ENCODE measurements at regions of chr10 and their contacts with region 1.

Region 1: GRCh38 chr10:6144406-6145165 is 55.8 kb downstream of the RBM17 start:
- DNase-seq: peak; percentile 76 to 97
- H3K4me3 ChIP-seq: peak overlapping the region; percentile 88 to 92
- H3K27ac ChIP-seq: peak overlapping the region; percentile 87 to 95
- H3K4me1 ChIP-seq: peaks cover 6 to 16% of the 10 kb centered on the region in 2 donors
- H3K27me3 ChIP-seq: no peaks in the 10 kb centered on the region
- CTCF ChIP-seq: no peak

Region 2: GRCh38 chr10:6124666-6125065 is 19.9 kb before region 1 on chr10:
- intact Hi-C with region 1: loop called (anchors 2 kb)
- DNase-seq: peak in 1 of 2 donors; percentile 83
- H3K4me3 ChIP-seq: peak overlapping the region in 1 of 2 donors; percentile 22
- H3K27ac ChIP-seq: peak overlapping the region; percentile 66 to 69
- H3K4me1 ChIP-seq: peaks cover 3 to 14% of the 10 kb centered on the region in 2 donors
- H3K27me3 ChIP-seq: no peaks in the 10 kb centered on the region
- CTCF ChIP-seq: no peak

Region 3: DNA sequence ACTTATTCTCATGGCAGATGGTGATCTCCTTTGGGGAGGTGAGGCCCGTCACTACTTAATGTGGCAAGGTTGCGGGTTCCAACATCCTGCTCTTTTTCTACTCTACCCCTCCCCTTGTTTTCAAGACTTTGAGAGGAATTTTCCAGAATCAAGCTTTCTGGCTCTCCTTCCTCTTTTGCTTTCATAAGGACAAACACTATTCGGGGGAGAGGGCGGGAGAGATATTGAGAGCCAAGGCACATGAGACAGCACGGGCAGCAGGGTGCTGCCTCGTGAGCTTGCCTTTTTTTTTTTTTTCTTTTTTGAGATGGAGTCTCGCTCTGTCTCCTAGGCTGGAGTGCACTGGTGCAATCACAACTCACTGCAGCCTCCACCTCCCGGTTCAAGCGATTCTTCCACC is 51.3 kb after region 1 on chr10:
- intact Hi-C with region 1: no loop called
- DNase-seq: peak in 1 of 2 donors; percentile 88
- H3K4me3 ChIP-seq: peak overlapping the region in 1 of 2 donors; percentile 41
- H3K27ac ChIP-seq: peak overlapping the region; percentile 92 to 97
- H3K4me1 ChIP-seq: peaks cover 33 to 66% of the 10 kb centered on the region in 2 donors
- H3K27me3 ChIP-seq: no peaks in the 10 kb centered on the region
- CTCF ChIP-seq: no peak

Measured in ascending aorta (tissue), 2 donors.